Colonic mucosa (tissue), 4 donors: ENCODE measurements at regions of chr15 and their contacts with region 1.

Region 1: DNA sequence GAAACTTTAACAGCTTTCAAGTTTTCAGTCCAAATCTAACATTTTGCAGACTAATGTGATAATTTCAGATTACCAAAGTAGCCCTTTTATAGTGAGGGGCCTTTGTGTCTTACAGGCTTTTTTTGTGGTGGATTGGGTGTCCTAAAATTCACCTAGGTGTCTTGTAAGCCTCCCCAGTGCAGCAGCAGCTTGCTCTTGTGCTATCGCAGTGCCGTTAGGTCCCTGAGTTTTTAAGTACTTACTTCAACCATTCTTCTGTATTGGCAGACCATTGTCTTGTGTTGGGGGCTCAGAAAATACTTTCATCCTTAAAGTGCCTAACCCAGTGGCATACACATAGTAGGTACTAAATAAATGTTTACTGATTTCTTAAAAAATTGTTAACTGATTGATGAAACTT is 2.1 kb downstream of the PDE8A start:
- DNase-seq: no peak
- H3K4me3 ChIP-seq: peak overlapping the region; percentile 71
- H3K27ac ChIP-seq: no peak overlapping the region
- H3K4me1 ChIP-seq: peaks cover 11% of the 10 kb centered on the region
- H3K27me3 ChIP-seq: no peaks in the 10 kb centered on the region
- CTCF ChIP-seq: no peak

Region 2: DNA sequence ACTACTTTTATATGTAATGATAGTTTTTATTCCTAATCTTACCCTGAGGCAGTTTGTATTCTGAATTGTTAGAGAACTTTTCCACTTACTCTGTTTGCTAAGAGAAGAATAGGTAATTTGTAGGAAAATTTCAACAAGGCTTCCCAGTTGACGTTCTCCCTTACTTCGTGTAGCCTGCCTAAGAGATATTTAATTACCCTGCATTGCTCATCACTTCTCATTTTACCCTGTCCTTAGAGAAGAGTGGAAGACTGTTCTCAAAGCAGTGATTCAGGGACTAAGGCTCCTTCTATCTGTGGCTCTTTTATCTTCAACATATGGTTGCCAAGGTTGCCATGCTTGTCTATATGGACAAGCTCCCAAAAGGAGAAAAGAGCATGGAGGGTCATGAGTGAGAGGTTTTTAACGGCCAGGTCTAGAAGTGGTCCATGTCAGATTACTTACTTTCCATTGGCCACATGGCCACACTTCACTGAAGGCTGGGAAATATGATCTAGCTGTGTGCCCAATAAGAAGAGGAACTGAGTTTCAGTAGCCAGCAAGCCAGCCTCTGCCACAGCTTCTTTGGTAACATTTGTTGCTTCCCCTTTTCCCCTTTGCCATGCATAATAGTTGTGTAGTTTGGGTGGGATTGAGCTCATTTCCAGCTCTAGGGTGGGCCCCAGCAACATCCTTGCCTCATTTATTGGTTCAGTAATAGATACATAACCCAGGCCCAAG is 20.0 kb after region 1 on chr15:
- intact Hi-C with region 1: loop called (anchors 2 kb)
- DNase-seq: no peak
- H3K4me3 ChIP-seq: no peak overlapping the region
- H3K27ac ChIP-seq: no peak overlapping the region
- H3K4me1 ChIP-seq: peaks cover 28% of the 10 kb centered on the region
- H3K27me3 ChIP-seq: no peaks in the 10 kb centered on the region
- CTCF ChIP-seq: no peak